ENCODE measurements at regions of chr3 and their contacts with region 1.

Region 1: DNA sequence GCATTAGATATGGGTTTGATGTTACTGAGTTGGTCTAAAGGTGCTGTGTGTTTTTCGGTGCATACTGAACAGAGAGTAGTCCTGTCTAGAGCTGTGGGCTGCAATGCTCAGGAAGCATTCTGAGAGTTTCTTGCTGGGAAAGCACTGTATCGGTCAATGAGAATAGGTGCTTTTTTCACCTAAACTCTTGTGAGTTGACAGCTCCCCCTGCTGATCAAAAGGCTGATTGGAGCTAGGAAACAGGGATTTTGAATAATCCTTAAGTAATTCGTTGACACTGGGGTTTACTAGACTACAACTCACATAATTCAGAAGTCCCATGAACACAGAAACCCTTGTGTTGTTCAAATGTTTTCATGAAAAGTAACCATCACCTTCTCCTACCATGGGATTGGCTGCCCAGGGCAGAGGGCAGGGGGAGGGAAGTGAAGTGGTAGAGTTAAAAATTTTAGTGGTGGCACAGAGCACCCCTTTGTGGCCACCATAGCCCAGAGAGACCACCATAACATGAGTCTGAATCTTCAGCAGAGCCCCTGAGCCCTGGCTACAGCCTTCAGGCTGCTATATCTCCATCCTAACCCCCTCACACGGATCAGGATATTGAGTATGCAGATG is 13.0 kb upstream of the MANF start:
- DNase-seq: peak in 1 of 2 donors; percentile 75
- H3K4me3 ChIP-seq: no peak overlapping the region
- CTCF ChIP-seq: no peak
- POLR2A ChIP-seq: no peak

Region 2: GRCh38 chr3:50971487-50971924 is 400.5 kb before region 1 on chr3:
- intact Hi-C with region 1: loop called (anchors 10 kb)
- DNase-seq: no peak
- H3K4me3 ChIP-seq: no peak overlapping the region
- CTCF ChIP-seq: peak in 1 of 3 donors; percentile 31
- POLR2A ChIP-seq: no peak

Region 3: GRCh38 chr3:52350416-52350815 is 978.4 kb after region 1 on chr3:
- intact Hi-C with region 1: no loop called
- DNase-seq: no peak
- H3K4me3 ChIP-seq: no peak overlapping the region
- CTCF ChIP-seq: no peak
- POLR2A ChIP-seq: no peak